ENCODE measurements at regions of chr2 and their contacts with region 1.

Region 1: DNA sequence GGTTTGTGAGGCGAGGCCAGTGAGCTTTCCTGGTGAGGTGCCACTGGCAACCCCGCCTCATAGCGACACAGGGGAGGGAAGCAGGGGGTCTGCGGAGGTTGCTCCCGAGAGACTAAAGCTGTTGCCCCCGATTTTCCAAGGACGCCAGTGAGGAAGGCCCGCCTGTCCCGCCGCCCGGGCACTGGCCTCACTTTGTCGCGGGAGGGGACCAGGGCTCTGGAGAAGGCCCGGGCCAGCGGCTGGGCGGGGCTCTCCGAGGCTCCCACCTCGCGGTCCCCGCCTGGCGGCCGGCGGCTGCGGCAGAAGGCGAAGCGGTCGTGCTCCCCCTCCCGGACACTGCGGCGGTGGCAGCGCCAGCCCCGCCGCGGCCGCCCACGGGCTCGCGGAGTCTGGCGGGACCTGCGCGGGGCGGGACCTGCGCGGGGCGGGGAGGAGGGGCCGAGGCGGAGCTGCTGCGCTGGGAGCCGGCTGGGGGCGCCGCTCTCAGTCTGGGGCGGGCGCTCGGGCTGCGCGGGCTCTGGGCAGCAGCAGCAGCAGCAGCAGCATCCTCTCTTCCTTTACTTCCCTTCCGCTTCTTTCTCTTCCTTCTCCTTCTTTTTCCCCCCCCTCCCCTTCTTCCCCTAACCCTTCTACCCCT is at the start of gene MAP2:
- DNase-seq: peak; percentile 85 to 94 (median 93)
- ATAC-seq: peak; percentile 100
- H3K4me3 ChIP-seq: peak within 1 kb of the TSS; percentile 89
- H3K27ac ChIP-seq: no peak within 1 kb of the TSS
- H3K4me1 ChIP-seq: no peaks in the 10 kb centered on the region
- H3K27me3 ChIP-seq: no peaks in the 10 kb centered on the region
- total RNA-seq, gene MAP2: 2.8 to 6.2 (median 4.2) TPM

Region 2: GRCh38 chr2:209549589-209549988 is 125.9 kb after region 1 on chr2:
- intact Hi-C with region 1: loop called in 2 of 4 experiments (anchors 10 kb)
- DNase-seq: no peak
- ATAC-seq: no peak
- H3K4me3 ChIP-seq: no peak overlapping the region
- H3K27ac ChIP-seq: no peak overlapping the region
- H3K4me1 ChIP-seq: no peaks in the 10 kb centered on the region
- H3K27me3 ChIP-seq: no peaks in the 10 kb centered on the region

Region 3: DNA sequence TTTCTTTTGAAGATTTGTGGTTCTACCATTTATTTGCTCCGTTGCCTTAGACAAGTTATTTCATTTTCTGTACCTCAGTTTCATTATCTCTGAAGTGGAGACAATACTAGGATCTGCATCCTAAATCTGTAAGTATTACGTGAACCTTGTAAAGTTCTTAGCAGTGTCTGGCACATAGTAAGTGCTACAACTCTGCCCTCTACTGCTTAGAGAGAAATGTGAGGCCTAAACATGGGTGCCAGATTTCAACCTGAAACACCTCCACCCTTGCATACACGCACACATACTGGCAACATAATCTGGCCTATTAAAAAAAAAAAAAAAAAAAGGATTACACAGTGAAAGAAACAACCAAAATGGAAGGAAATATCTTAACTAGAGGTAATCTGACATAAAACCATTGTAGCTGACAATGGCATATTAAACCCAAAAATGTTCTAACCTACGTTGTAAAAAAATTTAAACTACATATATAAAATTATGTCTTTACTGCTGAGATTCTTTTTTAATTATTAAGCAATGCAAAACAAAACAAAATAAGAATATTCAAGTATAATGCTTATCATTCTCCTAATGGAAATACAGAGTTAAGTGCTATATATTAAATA is 132.8 kb after region 1 on chr2:
- intact Hi-C with region 1: loop called in 2 of 4 experiments (anchors 5 to 10 kb)
- DNase-seq: no peak
- ATAC-seq: peak in 1 of 2 donors; percentile 71
- H3K4me3 ChIP-seq: no peak overlapping the region
- H3K27ac ChIP-seq: no peak overlapping the region
- H3K4me1 ChIP-seq: no peaks in the 10 kb centered on the region
- H3K27me3 ChIP-seq: no peaks in the 10 kb centered on the region

Region 4: GRCh38 chr2:209564816-209565215 is 141.1 kb after region 1 on chr2:
- intact Hi-C with region 1: loop called in 1 of 4 experiments (anchors 5 kb)
- DNase-seq: no peak
- ATAC-seq: no peak
- H3K4me3 ChIP-seq: no peak overlapping the region
- H3K27ac ChIP-seq: no peak overlapping the region
- H3K4me1 ChIP-seq: no peaks in the 10 kb centered on the region
- H3K27me3 ChIP-seq: no peaks in the 10 kb centered on the region